Prostate gland (tissue), 2 donors: ENCODE measurements at regions of chr1 and their contacts with region 1.

Region 1: GRCh38 chr1:48697066-48697707 is 79.5 kb downstream of the BEND5 start:
- DNase-seq: peak; percentile 37
- H3K4me3 ChIP-seq: no peak overlapping the region
- H3K27ac ChIP-seq: no peak overlapping the region
- H3K4me1 ChIP-seq: no peaks in the 10 kb centered on the region
- H3K27me3 ChIP-seq: no peaks in the 10 kb centered on the region
- CTCF ChIP-seq: peak; percentile 60 to 84 (median 80)
- POLR2A ChIP-seq: no peak

Region 2: GRCh38 chr1:48572646-48573261 is 124.4 kb before region 1 on chr1:
- intact Hi-C with region 1: loop called (anchors 2 kb)
- DNase-seq: no peak
- H3K4me3 ChIP-seq: no peak overlapping the region
- H3K27ac ChIP-seq: no peak overlapping the region
- H3K4me1 ChIP-seq: no peaks in the 10 kb centered on the region
- H3K27me3 ChIP-seq: no peaks in the 10 kb centered on the region
- CTCF ChIP-seq: peak in 3 of 4 experiments; percentile 10 to 56 (median 52)
- POLR2A ChIP-seq: no peak